Posterior vena cava (tissue), 2 donors: ENCODE measurements at regions of chr2 and their contacts with region 1.

Region 1: DNA sequence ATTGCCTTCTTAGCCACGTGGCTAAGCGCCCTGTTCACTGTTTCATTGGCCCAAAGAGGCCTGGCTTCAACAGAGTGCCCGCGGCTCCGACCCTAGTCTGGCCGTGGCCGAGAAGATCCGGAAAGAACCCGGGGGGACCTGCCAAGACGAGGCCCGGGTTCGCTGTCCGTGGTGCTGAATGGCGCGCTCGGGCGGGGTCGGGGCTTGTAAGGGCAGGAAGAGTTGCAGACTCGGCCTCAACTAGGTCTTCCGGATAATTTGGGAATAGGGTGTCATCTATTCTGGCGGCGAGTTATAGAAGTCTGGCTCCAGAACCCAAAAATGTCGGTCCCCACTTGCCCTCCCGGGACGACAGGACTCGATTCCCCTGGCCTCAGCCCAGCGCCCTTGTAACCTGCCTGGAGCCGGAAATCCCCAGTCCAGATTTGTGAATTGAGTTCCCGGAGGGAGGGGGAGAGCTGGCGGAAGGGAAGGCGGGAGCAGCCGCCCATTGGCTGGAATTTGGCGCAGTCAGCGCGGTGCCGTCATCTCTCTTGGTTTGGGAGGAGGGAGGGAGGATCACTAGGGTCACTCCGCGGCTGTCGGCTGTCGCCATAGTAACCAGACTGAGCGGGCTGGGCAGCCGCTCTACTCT is 3.5 kb downstream of the CDK5R2 start:
- DNase-seq: peak; percentile 93

Region 2: GRCh38 chr2:217899231-217900009 is 1063.6 kb before region 1 on chr2:
- intact Hi-C with region 1: loop called in 1 of 2 experiments (anchors 5 kb)
- DNase-seq: peak; percentile 91